ENCODE measurements at regions of chr22 and their contacts with region 1.

Region 1: DNA sequence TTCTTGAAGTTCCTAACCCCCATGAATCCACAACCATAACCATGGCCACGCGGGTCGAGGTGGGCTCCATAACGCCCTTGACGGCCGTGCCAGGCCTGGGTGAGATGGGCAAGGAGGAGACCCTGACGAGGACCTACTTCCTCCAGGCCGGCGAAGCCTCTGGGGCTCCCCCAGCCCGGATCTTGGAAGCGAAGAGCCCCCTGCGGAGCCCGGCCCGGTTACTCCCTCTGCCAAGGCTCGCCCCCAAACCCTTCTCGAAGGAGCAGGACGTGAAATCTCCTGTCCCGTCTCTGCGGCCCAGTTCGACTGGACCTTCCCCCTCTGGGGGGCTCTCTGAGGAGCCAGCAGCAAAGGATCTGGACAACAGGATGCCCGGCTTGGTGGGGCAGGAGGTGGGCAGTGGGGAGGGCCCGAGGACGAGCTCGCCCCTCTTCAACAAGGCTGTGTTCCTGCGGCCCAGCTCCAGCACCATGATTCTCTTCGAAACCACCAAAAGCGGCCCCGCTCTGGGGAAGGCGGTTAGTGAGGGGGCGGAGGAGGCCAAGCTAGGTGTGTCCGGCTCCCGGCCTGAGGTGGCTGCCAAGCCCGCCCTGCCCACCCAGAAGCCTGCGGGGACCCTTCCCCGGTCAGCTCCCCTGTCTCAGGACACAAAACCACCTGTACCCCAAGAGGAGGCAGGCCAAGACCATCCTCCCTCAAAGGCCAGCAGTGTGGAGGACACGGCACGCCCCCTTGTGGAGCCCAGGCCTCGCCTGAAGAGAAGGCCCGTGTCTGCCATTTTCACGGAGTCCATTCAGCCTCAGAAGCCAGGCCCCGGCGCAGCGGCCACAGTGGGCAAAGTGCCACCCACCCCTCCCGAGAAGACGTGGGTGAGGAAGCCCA is 75.7 kb downstream of the KIAA1671 start:
- DNase-seq: peak; percentile 11
- ATAC-seq: no peak
- H3K4me3 ChIP-seq: no peak overlapping the region
- H3K27ac ChIP-seq: peak overlapping the region; percentile 94
- H3K4me1 ChIP-seq: peaks cover 27% of the 10 kb centered on the region
- H3K27me3 ChIP-seq: no peaks in the 10 kb centered on the region
- CTCF ChIP-seq: peak; percentile 48

Region 2: GRCh38 chr22:24951942-24952836 is 76.0 kb before region 1 on chr22 and contains the start of gene KIAA1671:
- CTCF ChIA-PET with region 1: no interaction called
- POLR2A ChIA-PET with region 1: no interaction called
- intact Hi-C with region 1: loop called (anchors 5 kb)
- DNase-seq: peak; percentile 85
- ATAC-seq: peak; percentile 86
- H3K4me3 ChIP-seq: peak within 1 kb of the TSS; percentile 98
- H3K27ac ChIP-seq: peak within 1 kb of the TSS; percentile 88
- H3K4me1 ChIP-seq: peaks cover 13% of the 10 kb centered on the region
- H3K27me3 ChIP-seq: no peaks in the 10 kb centered on the region
- CTCF ChIP-seq: peak; percentile 91
- total RNA-seq, gene KIAA1671: 18.6 and 22.1 TPM in 2 replicates